Activated CD4-positive, alpha-beta T cell treated with anti-CD3 and anti-CD28 coated beads, Interleukin-2, amount 10 ng/mL, durations not matched to agents 24 days and 14 days (primary cell): ENCODE measurements at regions of chr6 and their contacts with region 1.

Region 1: DNA sequence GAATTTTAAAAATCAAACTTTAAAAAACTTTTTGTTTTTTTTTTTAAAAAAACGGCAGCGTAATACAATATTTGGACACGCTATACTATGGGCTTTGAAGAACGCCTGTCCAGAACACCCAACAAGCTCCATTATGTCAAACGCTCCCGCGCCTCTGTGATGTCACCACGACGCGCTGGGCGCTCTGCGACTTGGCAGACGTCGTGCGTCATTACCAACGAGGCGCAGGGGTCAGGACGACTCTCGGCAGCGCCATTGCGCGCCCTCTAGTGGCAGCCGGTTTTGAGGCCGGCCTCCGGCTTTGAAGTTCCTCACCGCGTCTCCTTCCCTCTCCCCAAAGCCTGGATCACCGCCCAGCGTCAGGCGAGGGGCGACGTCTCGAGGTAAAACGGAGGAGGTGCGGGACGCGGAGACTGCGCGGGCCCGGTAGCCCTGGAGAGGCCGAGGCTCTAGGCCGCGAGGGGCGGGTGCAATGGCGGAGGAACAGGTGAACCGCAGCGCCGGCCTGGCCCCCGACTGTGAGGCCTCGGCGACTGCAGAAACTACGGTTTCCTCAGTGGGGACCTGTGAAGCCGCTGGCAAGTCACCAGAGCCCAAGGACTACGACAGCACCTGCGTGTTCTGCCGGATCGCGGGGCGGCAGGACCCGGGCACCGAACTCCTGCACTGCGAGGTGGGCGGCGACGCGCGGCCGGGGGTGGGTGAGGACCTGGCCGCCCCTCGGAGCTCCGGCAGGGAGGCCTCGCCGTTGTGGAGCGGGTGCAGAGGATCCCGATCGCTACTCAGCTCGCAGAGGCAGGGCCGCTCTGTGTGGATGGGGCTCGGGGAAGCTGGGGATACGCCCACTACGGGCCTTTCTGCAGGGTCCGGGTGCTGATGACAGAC is at the start of gene HINT3:
- DNase-seq: peak; percentile 99
- H3K4me3 Mint-ChIP-seq: no peak within 1 kb of the TSS
- H3K27ac Mint-ChIP-seq: peak within 1 kb of the TSS; percentile 82
- H3K4me1 Mint-ChIP-seq: peaks cover 4% of the 10 kb centered on the region
- H3K27me3 Mint-ChIP-seq: peaks cover 1% of the 10 kb centered on the region
- total RNA-seq, gene HINT3: 8.5 and 8.9 TPM in 2 replicates

Region 2: DNA sequence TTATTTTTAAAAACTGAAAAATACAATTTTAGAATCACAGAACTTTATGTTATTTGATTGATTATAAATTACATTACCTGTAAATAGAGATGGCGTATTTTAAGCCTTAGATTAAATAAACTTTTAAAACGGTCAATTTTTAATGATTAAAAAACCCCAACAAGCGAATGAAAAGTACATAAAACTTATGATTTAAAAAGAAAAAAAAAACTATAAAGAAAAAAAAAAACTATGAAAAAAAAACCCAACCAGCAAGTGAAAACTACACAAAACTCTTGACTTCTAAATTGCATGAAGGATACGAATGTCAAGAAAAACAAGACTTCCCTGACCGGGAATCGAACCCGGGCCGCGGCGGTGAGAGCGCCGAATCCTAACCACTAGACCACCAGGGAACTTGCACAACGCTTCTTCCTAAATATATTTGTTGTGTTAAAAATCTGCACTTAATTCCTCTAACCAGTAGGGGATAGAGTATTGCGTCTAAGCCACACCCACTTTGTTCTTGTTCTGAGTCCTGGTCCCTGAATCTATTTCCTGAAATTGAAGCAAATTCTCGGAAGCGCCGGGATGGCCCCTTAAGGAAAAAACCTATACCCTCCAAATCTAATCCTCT is 176.7 kb before region 1 on chr6:
- intact Hi-C with region 1: loop called (anchors 1 kb)
- DNase-seq: peak; percentile 95
- H3K4me3 Mint-ChIP-seq: no peak overlapping the region
- H3K27ac Mint-ChIP-seq: no peak overlapping the region
- H3K4me1 Mint-ChIP-seq: peaks cover 10% of the 10 kb centered on the region
- H3K27me3 Mint-ChIP-seq: peaks cover 25% of the 10 kb centered on the region

Region 3: GRCh38 chr6:125858427-125859320 is 98.1 kb before region 1 on chr6:
- intact Hi-C with region 1: loop called (anchors 1 kb)
- DNase-seq: peak; percentile 77
- H3K4me3 Mint-ChIP-seq: no peak overlapping the region
- H3K27ac Mint-ChIP-seq: no peak overlapping the region
- H3K4me1 Mint-ChIP-seq: peaks cover 4% of the 10 kb centered on the region
- H3K27me3 Mint-ChIP-seq: no peaks in the 10 kb centered on the region

Region 4: GRCh38 chr6:125904871-125905270 is 51.9 kb before region 1 on chr6:
- intact Hi-C with region 1: loop called (anchors 1 kb)
- DNase-seq: peak; percentile 83
- H3K4me3 Mint-ChIP-seq: peak overlapping the region; percentile 15
- H3K27ac Mint-ChIP-seq: peak overlapping the region; percentile 67
- H3K4me1 Mint-ChIP-seq: peaks cover 34% of the 10 kb centered on the region
- H3K27me3 Mint-ChIP-seq: no peaks in the 10 kb centered on the region

Region 5: GRCh38 chr6:125923987-125924568 is 32.7 kb before region 1 on chr6:
- intact Hi-C with region 1: loop called (anchors 1 kb)
- DNase-seq: peak; percentile 75
- H3K4me3 Mint-ChIP-seq: peak overlapping the region; percentile 44
- H3K27ac Mint-ChIP-seq: peak overlapping the region; percentile 66
- H3K4me1 Mint-ChIP-seq: peaks cover 50% of the 10 kb centered on the region
- H3K27me3 Mint-ChIP-seq: no peaks in the 10 kb centered on the region

Region 6: GRCh38 chr6:125944434-125944816 is 12.3 kb before region 1 on chr6:
- intact Hi-C with region 1: no loop called
- DNase-seq: no peak
- H3K4me3 Mint-ChIP-seq: no peak overlapping the region
- H3K27ac Mint-ChIP-seq: no peak overlapping the region
- H3K4me1 Mint-ChIP-seq: peaks cover 22% of the 10 kb centered on the region
- H3K27me3 Mint-ChIP-seq: peaks cover 6% of the 10 kb centered on the region

Region 7: DNA sequence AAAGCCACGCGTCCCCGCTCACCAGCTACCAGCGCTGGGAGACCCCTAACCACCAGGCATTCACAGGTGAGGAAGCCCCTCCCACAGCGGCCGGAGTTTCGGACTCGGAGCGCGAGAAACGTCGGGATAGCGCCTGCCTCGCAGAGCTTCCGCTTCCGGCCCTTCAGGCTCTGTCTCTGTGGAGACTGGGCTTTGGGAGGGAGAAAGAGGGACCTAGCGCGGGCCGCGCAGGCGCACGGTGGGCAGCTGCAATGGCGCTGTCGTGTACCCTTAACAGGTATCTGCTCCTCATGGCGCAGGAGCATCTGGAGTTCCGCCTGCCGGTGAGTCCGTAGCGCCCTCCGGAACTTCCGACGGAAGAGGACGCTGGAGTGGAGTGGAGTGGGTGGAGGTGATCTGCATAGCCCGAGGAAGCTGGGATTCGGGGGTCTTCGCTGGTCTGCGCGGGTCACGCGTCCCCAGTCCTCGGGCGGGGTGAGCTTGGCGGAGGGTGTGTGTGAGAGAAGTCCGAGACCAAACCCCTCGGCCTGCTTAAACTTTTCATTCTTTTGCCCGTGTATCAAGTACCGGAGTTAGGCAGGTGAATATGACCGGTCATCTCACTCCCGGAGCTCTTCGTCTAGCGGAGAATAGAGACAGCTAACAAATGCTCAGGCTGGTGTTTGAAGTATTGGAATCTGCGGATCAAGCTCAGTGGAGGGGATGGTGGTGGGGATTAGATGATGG is 29.7 kb after region 1 on chr6 and contains the start of gene TRMT11:
- intact Hi-C with region 1: loop called (anchors 1 kb)
- DNase-seq: peak; percentile 93
- H3K4me3 Mint-ChIP-seq: peak within 1 kb of the TSS; percentile 8
- H3K27ac Mint-ChIP-seq: no peak within 1 kb of the TSS
- H3K4me1 Mint-ChIP-seq: peaks cover 7% of the 10 kb centered on the region
- H3K27me3 Mint-ChIP-seq: no peaks in the 10 kb centered on the region
- total RNA-seq, gene TRMT11: 33.6 and 34.4 TPM in 2 replicates

Region 8: GRCh38 chr6:126156973-126157372 is 200.2 kb after region 1 on chr6:
- intact Hi-C with region 1: no loop called
- DNase-seq: no peak
- H3K4me3 Mint-ChIP-seq: no peak overlapping the region
- H3K27ac Mint-ChIP-seq: no peak overlapping the region
- H3K4me1 Mint-ChIP-seq: peaks cover 1% of the 10 kb centered on the region
- H3K27me3 Mint-ChIP-seq: peaks cover 3% of the 10 kb centered on the region